ENCODE measurements at regions of chr7 and their contacts with region 1.

Region 1: DNA sequence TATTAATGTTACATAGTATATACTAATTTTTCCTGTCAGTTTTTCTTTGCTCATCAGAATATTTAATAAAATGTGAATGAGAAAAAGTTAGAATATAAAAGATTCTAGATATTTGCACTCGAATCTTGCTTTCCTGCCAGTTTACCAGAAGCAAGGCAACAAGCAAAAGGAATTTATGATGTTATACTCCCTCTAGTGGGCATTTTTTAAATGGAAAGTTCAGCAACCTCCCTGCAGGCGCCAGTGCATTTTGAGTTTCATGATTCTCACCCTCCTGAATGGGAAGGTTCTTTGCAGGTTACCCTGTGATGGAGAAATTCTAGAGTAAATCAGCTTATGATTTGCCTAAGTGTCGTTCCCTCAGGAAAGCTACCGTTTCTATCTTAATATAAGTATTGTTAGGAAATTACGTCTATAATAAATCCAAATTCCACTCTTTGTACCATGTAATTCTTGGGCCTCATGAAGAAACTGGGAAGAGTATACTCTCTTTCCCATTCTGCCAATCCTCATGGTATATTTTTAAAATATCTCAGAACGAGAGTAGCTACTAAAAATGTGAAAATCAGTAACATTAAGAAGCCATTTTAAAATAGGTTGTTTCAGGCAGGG is 350.0 kb downstream of the CRPPA start:
- ATAC-seq: peak in 5 of 8 experiments; percentile 41 to 72 (median 57)
- H3K4me3 ChIP-seq: no peak overlapping the region
- H3K27ac ChIP-seq: no peak overlapping the region
- H3K4me1 ChIP-seq: no peaks in the 10 kb centered on the region

Region 2: GRCh38 chr7:15305002-15305600 is 766.3 kb before region 1 on chr7:
- in situ Hi-C with region 1: loop called in 2 of 9 experiments (anchors 25 kb)
- ATAC-seq: peak in 1 of 8 experiments; percentile 19
- H3K4me3 ChIP-seq: no peak overlapping the region
- H3K27ac ChIP-seq: no peak overlapping the region
- H3K4me1 ChIP-seq: no peaks in the 10 kb centered on the region

Region 3: DNA sequence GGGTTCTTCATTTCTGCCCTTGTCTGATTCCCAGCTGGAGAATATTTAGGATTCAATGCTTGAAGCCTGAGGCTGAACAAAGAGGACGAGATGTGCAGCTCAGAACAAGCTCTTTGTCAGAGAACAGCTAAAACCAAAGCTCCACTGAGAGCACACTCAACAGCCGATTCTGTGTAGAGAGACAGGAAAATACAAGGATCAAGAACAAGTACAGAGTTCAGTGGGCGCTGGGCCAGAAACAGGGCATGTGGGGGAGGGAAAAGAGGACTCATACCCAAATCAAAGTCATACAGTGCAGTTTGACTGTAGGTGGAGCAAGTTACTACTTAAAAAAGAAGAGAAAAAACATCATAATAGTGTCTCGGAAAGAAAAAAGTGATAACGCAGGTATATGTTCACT is 509.5 kb before region 1 on chr7 and contains the start of gene AGMO:
- in situ Hi-C with region 1: loop called in 1 of 9 experiments (anchors 25 kb)
- ATAC-seq: peak in 4 of 8 experiments; percentile 7 to 41 (median 28)
- H3K4me3 ChIP-seq: no peak within 1 kb of the TSS
- H3K27ac ChIP-seq: no peak within 1 kb of the TSS
- H3K4me1 ChIP-seq: peaks cover 0 to 3% of the 10 kb centered on the region in 2 donors
- total RNA-seq, gene AGMO: 0.13 to 8.9 (median 0.50) TPM in 6 of 8 experiments, not detected in the others

Region 4: GRCh38 chr7:15720849-15721471 is 350.4 kb before region 1 on chr7:
- in situ Hi-C with region 1: loop called in 2 of 9 experiments (anchors 25 kb)
- ATAC-seq: no peak
- H3K4me3 ChIP-seq: no peak overlapping the region
- H3K27ac ChIP-seq: no peak overlapping the region
- H3K4me1 ChIP-seq: peaks cover 0 to 6% of the 10 kb centered on the region in 2 donors

Region 5: GRCh38 chr7:16564909-16565426 is 493.6 kb after region 1 on chr7:
- in situ Hi-C with region 1: loop called in 4 of 9 experiments (anchors 10 to 25 kb)
- ATAC-seq: peak in 5 of 8 experiments; percentile 35 to 64 (median 42)
- H3K4me3 ChIP-seq: no peak overlapping the region
- H3K27ac ChIP-seq: no peak overlapping the region
- H3K4me1 ChIP-seq: no peaks in the 10 kb centered on the region

Measured in motor neuron (in vitro differentiated cells).